Dendritic cell treated with granulocyte-macrophage colony-stimulating factor and Interleukin-4, amounts not matched to agents 40 ng/mL and 50 ng/mL, for 4 days (primary cell): ENCODE measurements at regions of chr10 and their contacts with region 1.

Region 1: GRCh38 chr10:52729271-52730104 is 43.1 kb downstream of the MBL2 start:
- H3K4me3 Mint-ChIP-seq: no peak overlapping the region
- H3K27ac Mint-ChIP-seq: no peak overlapping the region
- H3K4me1 Mint-ChIP-seq: no peaks in the 10 kb centered on the region
- H3K27me3 Mint-ChIP-seq: no peaks in the 10 kb centered on the region

Region 2: DNA sequence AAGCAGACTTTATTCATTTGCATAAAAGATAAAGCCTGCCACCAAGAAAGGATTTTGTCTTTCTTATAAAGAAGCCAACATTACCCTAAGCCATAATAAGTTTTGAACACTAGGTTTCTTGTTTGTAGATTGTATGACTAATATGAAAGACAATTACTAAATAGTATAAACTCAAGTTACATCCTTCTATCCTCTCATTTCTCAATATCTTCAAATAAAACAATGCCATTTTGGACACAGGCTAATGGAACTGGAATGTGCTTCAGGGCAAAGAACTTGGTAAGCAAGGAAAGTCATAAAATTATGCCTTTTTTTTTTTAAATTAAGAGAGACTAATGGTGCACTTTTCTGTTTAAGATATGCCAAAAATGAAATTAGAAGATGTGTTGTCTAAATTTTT is 277.7 kb before region 1 on chr10:
- intact Hi-C with region 1: no loop called
- H3K4me3 Mint-ChIP-seq: no peak overlapping the region
- H3K27ac Mint-ChIP-seq: no peak overlapping the region
- H3K4me1 Mint-ChIP-seq: no peaks in the 10 kb centered on the region
- H3K27me3 Mint-ChIP-seq: no peaks in the 10 kb centered on the region

Region 3: GRCh38 chr10:52644373-52645186 is 84.9 kb before region 1 on chr10:
- intact Hi-C with region 1: loop called (anchors 1 kb)
- H3K4me3 Mint-ChIP-seq: no peak overlapping the region
- H3K27ac Mint-ChIP-seq: no peak overlapping the region
- H3K4me1 Mint-ChIP-seq: no peaks in the 10 kb centered on the region
- H3K27me3 Mint-ChIP-seq: no peaks in the 10 kb centered on the region

Region 4: GRCh38 chr10:52746169-52746568 is 16.7 kb after region 1 on chr10:
- intact Hi-C with region 1: no loop called
- H3K4me3 Mint-ChIP-seq: no peak overlapping the region
- H3K27ac Mint-ChIP-seq: no peak overlapping the region
- H3K4me1 Mint-ChIP-seq: no peaks in the 10 kb centered on the region
- H3K27me3 Mint-ChIP-seq: no peaks in the 10 kb centered on the region